Activated CD8-positive, alpha-beta T cell treated with anti-CD3 and anti-CD28 coated beads for 36 hours (primary cell): ENCODE measurements at regions of chr15 and their contacts with region 1.

Region 1: DNA sequence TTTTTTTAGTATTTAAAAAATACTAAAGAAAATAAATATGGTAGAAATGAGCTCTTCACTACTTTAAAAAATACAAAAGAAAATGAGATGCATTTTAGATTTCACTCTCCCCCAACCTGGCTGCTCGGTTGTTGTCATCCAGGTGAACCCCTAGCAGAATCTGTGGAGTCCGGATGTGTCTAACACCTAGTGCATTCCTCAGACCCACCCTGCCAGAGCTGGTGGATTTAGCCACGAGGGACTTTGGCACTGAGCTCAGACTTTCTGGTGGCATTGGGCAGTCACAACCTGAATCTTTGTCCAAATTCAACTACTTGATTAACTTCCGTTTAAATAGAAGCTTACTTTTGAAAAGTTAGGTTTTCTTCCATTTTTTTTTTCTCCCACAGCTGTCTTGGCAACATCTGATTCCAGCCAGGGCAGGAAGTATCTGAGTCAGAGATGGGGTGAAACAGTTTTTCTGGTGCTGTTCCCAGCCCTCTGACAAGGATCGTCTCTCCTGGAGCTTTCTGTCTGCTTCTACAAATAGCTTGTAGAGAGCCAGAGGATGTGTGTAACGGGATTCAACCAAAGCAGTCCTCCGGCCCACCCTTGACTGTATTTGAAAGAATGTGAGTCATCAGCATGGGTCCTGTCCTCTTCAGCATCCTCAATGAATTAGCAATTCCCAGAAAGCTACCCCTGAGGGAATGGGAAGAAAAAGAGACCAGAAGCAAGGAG is 301.8 kb upstream of the MCTP2 start:
- DNase-seq: no peak
- ATAC-seq: no peak
- H3K4me3 Mint-ChIP-seq: no peak overlapping the region
- H3K27ac Mint-ChIP-seq: no peak overlapping the region
- H3K4me1 Mint-ChIP-seq: peaks cover 4% of the 10 kb centered on the region
- H3K27me3 Mint-ChIP-seq: peaks cover 3% of the 10 kb centered on the region
- CTCF ChIP-seq: no peak

Region 2: DNA sequence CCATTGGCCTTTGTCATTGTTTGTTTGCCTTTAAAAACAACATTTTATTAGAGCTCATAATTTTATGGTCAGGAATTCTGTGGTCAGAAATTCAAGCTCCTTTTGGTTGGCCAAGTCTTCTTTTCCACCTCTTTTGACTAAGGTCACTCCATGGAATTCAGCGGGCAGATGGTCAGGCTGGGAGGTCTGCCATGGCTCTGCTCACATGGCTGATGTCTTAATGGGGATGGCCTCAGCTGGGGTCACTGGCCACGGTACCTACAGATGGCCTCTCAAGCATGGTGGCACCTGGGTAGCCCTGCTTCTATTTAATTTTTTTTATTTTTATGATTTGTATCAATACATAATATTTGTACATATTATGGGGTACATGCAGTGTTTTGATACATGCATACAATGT is 59.0 kb before region 1 on chr15:
- CTCF ChIA-PET with region 1: no interaction called
- POLR2A ChIA-PET with region 1: no interaction called
- intact Hi-C with region 1: loop called (anchors 10 kb)
- DNase-seq: no peak
- ATAC-seq: no peak
- H3K4me3 Mint-ChIP-seq: no peak overlapping the region
- H3K27ac Mint-ChIP-seq: no peak overlapping the region
- H3K4me1 Mint-ChIP-seq: no peaks in the 10 kb centered on the region
- H3K27me3 Mint-ChIP-seq: peaks cover 3% of the 10 kb centered on the region
- CTCF ChIP-seq: no peak